ENCODE measurements at regions of chr14 and their contacts with region 1.

Region 1: GRCh38 chr14:61837336-61838229 is 75.4 kb downstream of the SNAPC1 start:
- DNase-seq: peak; percentile 84
- H3K4me3 Mint-ChIP-seq: no peak overlapping the region
- H3K27ac Mint-ChIP-seq: no peak overlapping the region
- H3K4me1 Mint-ChIP-seq: peaks cover 8% of the 10 kb centered on the region
- H3K27me3 Mint-ChIP-seq: peaks cover 7% of the 10 kb centered on the region

Region 2: DNA sequence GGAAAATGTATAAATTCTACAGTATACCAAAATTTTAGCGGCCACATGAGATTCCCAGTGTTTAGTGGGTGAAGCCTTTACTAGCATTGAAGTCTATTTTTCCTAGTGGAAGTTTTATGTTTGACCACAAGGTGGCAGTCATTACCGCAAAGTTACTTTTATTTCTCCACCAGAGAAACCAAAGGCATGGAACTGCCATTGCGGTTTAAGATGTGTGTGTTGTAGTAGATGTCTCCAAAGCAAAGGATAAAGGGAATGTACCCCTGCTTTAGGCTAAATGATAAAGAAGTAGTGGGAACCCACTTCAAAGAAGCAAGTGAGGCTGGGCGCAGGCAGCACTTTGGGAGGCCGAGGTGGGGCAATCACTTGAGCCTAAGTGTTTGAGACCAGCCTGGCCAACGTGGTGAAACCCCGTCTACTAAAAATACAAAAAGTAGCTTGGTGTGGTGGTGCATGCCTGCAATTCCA is 375.7 kb before region 1 on chr14:
- CTCF ChIA-PET with region 1: interaction called, 31 read pairs
- DNase-seq: peak; percentile 52
- H3K4me3 Mint-ChIP-seq: no peak overlapping the region
- H3K27ac Mint-ChIP-seq: peak overlapping the region; percentile 93
- H3K4me1 Mint-ChIP-seq: peaks cover 62% of the 10 kb centered on the region
- H3K27me3 Mint-ChIP-seq: no peaks in the 10 kb centered on the region

Region 3: DNA sequence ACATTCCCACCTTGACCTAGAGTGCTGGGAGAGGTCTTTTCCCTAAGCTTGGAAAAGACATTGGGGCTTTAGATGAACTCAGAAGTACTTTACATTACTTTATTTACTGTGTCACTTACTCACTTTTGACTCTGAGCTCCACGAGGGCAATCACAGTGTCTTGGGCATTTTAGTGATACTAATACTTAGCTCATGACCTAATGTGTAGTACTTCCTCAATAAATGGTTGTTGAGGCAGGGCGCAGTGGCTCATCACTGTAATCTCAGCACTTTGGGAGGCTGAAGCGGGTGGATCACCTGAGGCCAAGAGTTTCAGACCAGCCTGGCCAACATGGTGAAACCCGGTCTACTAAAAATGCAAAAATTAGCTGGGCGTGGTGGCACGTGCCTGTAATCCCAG is 95.2 kb before region 1 on chr14:
- CTCF ChIA-PET with region 1: interaction called, 21 read pairs
- DNase-seq: no peak
- H3K4me3 Mint-ChIP-seq: no peak overlapping the region
- H3K27ac Mint-ChIP-seq: peak overlapping the region; percentile 45
- H3K4me1 Mint-ChIP-seq: peaks cover 25% of the 10 kb centered on the region
- H3K27me3 Mint-ChIP-seq: no peaks in the 10 kb centered on the region

Region 4: DNA sequence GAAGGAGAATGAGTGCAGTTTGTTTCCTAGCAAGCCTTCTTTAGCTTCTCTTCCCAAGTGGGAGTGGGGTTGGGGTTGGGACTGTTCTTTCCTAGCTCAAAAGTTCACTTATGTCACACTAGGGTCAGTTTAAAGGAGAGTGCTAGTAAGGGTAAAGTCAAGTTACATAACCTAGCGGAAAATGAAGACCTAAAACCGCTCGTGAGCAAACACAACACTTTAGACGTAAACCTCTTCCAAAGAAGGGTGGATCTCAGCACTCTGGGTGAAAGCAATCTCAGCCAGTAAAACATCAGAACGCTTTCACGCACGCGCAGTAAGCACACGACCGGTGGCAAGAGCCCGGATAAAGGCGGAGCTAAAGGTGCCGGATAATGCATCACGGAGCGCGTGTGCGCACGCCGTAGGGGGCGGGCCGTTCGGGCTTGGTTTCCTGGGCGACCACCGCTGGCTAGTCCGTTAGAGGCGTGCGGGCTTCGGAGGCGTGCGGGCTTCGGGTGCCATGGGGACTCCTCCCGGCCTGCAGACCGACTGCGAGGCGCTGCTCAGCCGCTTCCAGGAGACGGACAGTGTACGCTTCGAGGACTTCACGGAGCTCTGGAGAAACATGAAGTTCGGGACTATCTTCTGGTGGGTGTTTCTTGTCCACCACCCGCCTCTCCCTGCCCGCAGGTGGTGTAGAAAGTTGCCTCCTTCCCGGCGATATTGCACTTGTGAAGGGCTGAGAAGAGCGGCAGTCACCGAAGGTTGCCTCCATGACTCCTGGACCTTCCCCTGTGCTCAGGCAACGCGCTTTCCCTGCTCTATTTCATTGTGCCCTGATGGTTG is 75.4 kb before region 1 on chr14 and contains the start of gene SNAPC1:
- CTCF ChIA-PET with region 1: interaction called, 32 read pairs
- DNase-seq: peak; percentile 99
- H3K4me3 Mint-ChIP-seq: peak within 1 kb of the TSS; percentile 98
- H3K27ac Mint-ChIP-seq: peak within 1 kb of the TSS; percentile 100
- H3K4me1 Mint-ChIP-seq: peaks cover 49% of the 10 kb centered on the region
- H3K27me3 Mint-ChIP-seq: peaks cover 8% of the 10 kb centered on the region

Measured in activated naive CD4-positive, alpha-beta T cell treated with anti-CD3 and anti-CD28 coated beads, Interleukin-2, amount 10 ng/mL, durations not matched to agents 7 days and 5 days (primary cell).